ENCODE measurements at regions of chr12 and their contacts with region 1.

Region 1: DNA sequence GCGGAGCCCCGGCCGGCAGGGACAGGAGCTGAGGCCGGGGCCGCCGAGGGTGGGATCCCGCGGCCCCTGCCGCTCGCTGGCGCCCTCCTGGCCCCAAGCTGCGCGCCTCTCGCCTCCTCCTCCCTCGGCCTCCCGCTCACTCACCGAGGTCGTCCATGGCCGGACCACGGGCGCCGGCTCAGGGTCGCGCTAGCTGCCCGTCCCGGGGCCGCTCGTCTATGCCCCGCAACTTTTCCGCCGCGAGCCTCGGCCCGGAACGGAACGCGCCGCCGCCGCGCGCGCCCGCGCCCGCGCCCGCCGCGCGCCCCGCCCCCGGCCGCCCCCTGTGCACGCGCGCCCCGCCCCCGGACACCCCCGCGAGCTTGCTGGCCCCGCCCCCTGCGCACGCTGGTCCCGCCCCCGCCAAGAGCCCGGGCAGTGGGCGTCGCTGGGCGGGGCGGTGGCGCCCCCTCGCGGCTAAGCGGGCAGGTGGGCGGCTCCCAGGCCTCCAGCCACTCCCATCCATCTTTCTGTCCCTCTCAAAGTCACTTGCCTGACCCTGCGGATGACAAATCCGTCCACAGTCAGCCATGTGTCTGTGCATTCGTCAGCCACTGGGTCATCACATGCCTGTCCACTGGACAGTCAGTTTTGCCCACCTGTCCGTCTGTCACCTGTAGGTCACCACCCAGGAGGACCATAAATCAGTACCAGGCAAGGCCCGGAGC is at the start of gene PXN:
- DNase-seq: peak; percentile 84 to 89
- H3K4me3 ChIP-seq: peak within 1 kb of the TSS; percentile 79 to 100
- H3K27ac ChIP-seq: peak within 1 kb of the TSS; percentile 97
- H3K4me1 ChIP-seq: no peaks in the 10 kb centered on the region
- H3K27me3 ChIP-seq: no peaks in the 10 kb centered on the region
- CTCF ChIP-seq: peak; percentile 83 to 96 (median 92)
- POLR2A ChIP-seq: peak; percentile 74 to 88
- total RNA-seq, gene PXN: 29.6 to 211 (median 41.2) TPM

Region 2: DNA sequence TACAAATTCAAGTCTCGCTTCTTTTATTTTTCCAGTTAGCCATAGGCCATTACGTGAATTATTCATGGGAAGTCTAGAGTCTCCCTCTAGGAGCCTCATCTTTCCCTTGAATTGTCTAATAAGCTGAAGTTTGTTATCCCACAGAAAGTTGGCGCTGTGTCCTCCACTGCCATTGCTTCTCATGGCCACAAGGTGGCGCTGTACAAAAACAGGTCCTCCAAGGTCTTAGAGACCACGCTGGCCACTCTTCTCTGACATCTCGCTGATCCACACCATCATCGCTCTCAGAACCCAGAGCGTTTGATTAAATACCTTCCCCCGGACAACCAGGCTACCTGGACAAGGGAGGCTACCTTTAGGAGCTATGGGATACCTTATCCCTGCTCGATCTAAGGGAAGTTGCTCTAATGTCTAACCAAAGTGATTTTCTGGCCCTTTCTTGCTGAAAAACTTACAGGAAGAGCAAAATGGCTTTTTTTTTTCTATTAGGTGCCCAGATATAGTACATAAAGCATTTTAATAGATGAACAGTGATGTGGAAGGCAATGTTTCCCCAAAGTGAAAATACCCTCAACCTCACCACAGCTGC is 821.1 kb before region 1 on chr12:
- intact Hi-C with region 1: no loop called
- DNase-seq: peak in 1 of 2 donors; percentile 13
- H3K4me3 ChIP-seq: no peak overlapping the region
- H3K27ac ChIP-seq: no peak overlapping the region
- H3K4me1 ChIP-seq: no peaks in the 10 kb centered on the region
- H3K27me3 ChIP-seq: no peaks in the 10 kb centered on the region
- CTCF ChIP-seq: peak in 3 of 4 experiments; percentile 14 to 44 (median 30)
- POLR2A ChIP-seq: no peak

Region 3: GRCh38 chr12:119544765-119545625 is 720.6 kb before region 1 on chr12:
- intact Hi-C with region 1: no loop called
- DNase-seq: peak; percentile 22 to 43
- H3K4me3 ChIP-seq: no peak overlapping the region
- H3K27ac ChIP-seq: no peak overlapping the region
- H3K4me1 ChIP-seq: no peaks in the 10 kb centered on the region
- H3K27me3 ChIP-seq: no peaks in the 10 kb centered on the region
- CTCF ChIP-seq: peak; percentile 51 to 72 (median 63)
- POLR2A ChIP-seq: no peak

Region 4: DNA sequence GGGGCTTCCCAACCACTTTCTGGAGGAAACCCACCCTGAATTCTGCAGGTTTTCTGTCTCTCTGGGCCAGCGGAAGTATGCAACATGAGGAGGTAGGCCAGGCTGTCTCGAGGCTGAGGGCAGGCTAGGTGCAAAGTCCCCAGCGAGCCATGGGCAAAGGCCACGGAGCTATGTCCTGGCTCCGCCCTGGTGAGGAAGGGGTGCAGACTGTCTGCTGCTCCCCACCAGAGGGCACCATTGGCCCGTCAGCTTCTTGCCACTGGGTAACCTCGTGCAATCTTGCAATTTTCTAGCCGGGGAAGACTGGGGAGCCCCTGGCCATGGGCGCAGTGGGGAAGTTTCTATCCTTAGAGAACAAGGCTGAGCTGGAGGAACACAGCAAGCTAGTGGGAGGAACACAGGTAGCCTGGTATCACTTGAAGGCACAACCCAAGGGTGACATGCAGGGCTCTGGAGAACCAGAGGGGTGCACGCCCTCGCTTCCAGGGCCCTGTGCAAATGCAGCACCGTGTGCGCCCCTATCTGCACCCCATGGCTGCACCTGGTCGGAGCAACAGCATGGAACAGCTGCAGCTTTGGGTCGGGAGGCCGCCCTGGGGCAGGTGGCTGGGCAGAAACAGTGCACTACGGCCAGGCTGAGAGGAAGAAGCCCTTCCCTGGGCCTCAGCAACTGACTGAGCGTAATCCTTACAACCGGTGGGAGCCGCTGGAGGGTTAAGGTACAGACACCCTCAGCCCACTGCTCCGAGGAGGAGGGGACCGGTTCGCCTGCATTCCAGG is 37.1 kb before region 1 on chr12:
- intact Hi-C with region 1: loop called (anchors 2 kb)
- DNase-seq: peak; percentile 87 to 88
- H3K4me3 ChIP-seq: no peak overlapping the region
- H3K27ac ChIP-seq: peak overlapping the region; percentile 93 to 97
- H3K4me1 ChIP-seq: peaks cover 36 to 45% of the 10 kb centered on the region in 2 donors
- H3K27me3 ChIP-seq: no peaks in the 10 kb centered on the region
- CTCF ChIP-seq: peak; percentile 94 to 99 (median 96)
- POLR2A ChIP-seq: no peak

Measured in uterus (tissue), 4 donors.